Calu3 (cell line): ENCODE measurements at regions of chr13 and their contacts with region 1.

Region 1: DNA sequence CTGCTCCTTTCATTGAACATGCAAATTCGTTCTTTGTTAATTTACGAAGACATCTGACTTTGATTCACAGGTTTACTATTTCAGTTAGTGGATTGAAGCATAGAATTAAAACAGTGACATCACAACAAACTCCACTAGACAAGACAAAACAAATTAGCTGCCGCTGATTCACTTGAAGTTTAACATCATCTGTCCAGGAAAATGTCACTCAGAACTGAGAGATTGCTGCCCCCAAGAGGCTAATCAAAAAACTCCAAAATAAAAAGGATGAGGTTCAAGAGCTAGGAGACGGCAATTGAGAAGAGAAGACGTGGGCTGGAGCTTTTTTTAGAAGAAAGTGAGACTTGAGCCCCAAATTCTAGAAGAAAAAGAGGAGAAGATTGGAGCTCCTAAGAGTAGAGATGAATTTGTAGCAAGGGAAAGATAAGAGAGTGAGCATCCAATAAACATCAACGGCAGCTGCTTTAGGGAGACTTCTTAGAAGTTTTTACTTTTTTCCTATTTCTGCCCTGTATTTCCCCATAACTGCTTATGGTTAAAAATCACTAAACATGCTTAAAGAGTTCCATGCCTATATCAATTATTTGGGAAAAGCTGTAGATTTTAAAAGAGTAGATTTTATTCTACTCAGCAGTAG is 40.8 kb upstream of the TPP2 start:
- DNase-seq: no peak
- H3K4me3 Mint-ChIP-seq: no peak overlapping the region
- H3K27ac Mint-ChIP-seq: no peak overlapping the region
- H3K4me1 Mint-ChIP-seq: no peaks in the 10 kb centered on the region
- H3K27me3 Mint-ChIP-seq: no peaks in the 10 kb centered on the region
- CTCF ChIP-seq: no peak

Region 2: GRCh38 chr13:102197193-102197592 is 358.8 kb before region 1 on chr13:
- CTCF ChIA-PET with region 1: interaction called, 3 read pairs
- intact Hi-C with region 1: loop called (anchors 10 kb)
- DNase-seq: peak; percentile 6
- H3K4me3 Mint-ChIP-seq: no peak overlapping the region
- H3K27ac Mint-ChIP-seq: no peak overlapping the region
- H3K4me1 Mint-ChIP-seq: peaks cover 10% of the 10 kb centered on the region
- H3K27me3 Mint-ChIP-seq: no peaks in the 10 kb centered on the region
- CTCF ChIP-seq: no peak